AG04449 (cell line): ENCODE measurements at regions of chr9 and their contacts with region 1.

Region 1: GRCh38 chr9:77456829-77457437 is 191.2 kb downstream of the GNA14 start:
- DNase-seq: no peak
- H3K4me3 ChIP-seq: no peak overlapping the region
- CTCF ChIP-seq: peak; percentile 79

Region 2: GRCh38 chr9:77163884-77164283 is 293.0 kb before region 1 on chr9:
- CTCF ChIA-PET with region 1: interaction called, 14 read pairs
- POLR2A ChIA-PET with region 1: no interaction called
- DNase-seq: peak; percentile 62
- H3K4me3 ChIP-seq: no peak overlapping the region
- CTCF ChIP-seq: no peak

Region 3: GRCh38 chr9:77194423-77194822 is 262.5 kb before region 1 on chr9:
- CTCF ChIA-PET with region 1: no interaction called
- POLR2A ChIA-PET with region 1: no interaction called
- DNase-seq: no peak
- H3K4me3 ChIP-seq: no peak overlapping the region
- CTCF ChIP-seq: no peak

Region 4: GRCh38 chr9:77427256-77427927 is 29.5 kb before region 1 on chr9:
- CTCF ChIA-PET with region 1: interaction called, 373 read pairs
- POLR2A ChIA-PET with region 1: no interaction called
- DNase-seq: no peak
- H3K4me3 ChIP-seq: no peak overlapping the region
- CTCF ChIP-seq: no peak

Region 5: DNA sequence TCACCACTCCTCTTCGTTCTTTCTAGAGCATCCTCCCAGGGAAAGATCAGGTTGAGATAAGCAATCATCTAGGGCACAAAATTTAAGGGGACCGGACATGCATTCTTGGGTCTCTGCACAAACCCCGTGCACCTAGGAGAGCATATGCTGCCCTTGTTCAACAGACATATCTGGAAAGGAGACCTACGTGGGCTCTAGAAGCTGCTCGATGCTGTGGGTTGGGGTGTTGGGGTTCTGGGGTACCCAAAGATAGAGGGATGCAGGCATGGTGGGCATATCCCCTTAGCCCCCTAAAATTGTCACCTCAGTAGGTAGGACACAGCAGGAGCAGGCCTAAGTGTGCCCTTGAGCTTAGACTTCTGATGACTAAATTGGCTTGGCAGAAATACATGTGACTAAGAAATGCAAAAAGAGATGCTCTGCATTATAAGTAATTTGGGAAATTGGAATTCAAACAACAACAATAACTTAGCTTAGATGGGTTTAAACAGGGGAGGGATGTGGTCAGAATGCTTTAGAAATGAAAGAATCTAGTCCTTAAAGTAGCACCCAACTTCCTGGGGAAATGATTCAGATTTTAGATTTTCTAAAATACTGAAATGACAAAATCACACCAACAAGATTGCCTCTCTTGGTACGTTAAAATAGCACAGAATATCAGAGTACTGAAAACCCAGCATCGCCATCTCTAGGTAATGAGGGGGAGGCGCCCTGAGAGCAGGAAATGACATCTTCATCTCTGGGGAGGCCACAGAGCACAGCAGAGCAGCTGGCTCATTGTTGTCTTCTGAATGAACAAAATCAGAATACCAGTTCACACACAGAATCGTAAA is 18.9 kb after region 1 on chr9:
- CTCF ChIA-PET with region 1: interaction called, 189 read pairs
- POLR2A ChIA-PET with region 1: no interaction called
- DNase-seq: peak; percentile 64
- H3K4me3 ChIP-seq: no peak overlapping the region
- CTCF ChIP-seq: no peak

Region 6: GRCh38 chr9:77502568-77502967 is 45.6 kb after region 1 on chr9:
- CTCF ChIA-PET with region 1: interaction called, 17 read pairs
- POLR2A ChIA-PET with region 1: no interaction called
- DNase-seq: no peak
- H3K4me3 ChIP-seq: no peak overlapping the region
- CTCF ChIP-seq: no peak

Region 7: DNA sequence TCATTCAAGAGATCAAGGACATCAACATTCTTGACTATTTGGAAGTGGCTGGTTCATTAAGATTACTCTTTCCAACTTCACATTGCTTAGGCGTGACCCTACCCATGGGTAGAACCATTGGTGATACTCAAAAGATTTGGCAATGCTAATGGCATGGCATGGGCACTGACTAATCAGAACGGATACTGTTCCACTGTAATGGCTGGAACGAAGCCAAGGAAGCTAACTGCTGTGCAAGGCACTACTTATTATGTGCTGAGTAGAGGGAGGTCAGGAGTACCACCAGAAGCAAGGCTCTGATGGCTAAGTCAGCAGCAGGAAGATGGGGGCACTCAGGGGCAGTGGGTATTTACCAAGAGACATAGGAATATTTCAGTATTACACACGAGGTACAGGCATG is 159.3 kb after region 1 on chr9:
- CTCF ChIA-PET with region 1: no interaction called
- POLR2A ChIA-PET with region 1: no interaction called
- DNase-seq: no peak
- H3K4me3 ChIP-seq: no peak overlapping the region
- CTCF ChIP-seq: no peak

Region 8: GRCh38 chr9:77764894-77765780 is 308.2 kb after region 1 on chr9:
- CTCF ChIA-PET with region 1: interaction called, 17 read pairs
- POLR2A ChIA-PET with region 1: no interaction called
- DNase-seq: peak; percentile 44
- H3K4me3 ChIP-seq: no peak overlapping the region
- CTCF ChIP-seq: peak; percentile 48